ENCODE measurements at regions of chr2 and their contacts with region 1.

Region 1: DNA sequence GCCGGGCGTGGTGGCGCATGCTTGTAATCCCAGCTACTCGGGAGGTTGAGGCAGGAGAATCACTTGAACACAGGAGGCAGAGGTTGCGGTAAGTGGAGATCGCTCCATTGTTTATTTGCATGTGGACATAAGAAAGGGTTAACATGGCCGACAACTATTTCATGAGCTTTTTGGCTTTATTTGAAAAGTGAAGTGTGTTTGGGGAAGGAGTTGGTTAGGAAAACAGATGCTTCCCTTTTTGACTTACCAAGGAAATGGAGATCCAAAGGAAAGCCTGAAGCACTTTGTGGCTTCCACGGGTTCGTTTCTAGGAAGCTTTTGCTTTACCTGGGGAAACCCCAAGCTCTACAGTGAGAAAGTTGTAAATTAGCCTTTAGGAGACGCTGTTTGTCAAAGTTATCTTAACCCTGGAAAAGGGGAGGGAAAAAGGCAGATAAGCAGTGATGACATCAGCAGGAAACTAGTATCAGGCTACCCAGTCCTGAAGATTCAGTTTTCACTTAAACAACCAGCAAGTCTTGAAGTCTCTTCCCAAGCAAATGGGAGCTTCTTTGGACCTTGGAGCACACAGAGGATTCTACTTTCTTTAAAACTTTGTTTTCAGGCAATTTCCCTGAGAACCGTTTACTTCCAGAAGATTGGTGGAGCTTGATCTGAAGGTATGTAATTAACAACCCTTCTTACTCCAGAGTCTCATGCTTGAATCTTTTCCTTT is at the start of gene CASP10:
- DNase-seq: peak in 4 of 14 experiments; percentile 39 to 89 (median 88)
- ATAC-seq: peak; percentile 89
- H3K4me3 ChIP-seq: peak within 1 kb of the TSS; percentile 77
- H3K4me3 Mint-ChIP-seq: peak within 1 kb of the TSS; percentile 96
- H3K27ac ChIP-seq: peak within 1 kb of the TSS; percentile 62 to 69
- H3K27ac Mint-ChIP-seq: peak within 1 kb of the TSS; percentile 91
- H3K4me1 ChIP-seq: peaks cover 38% of the 10 kb centered on the region
- H3K4me1 Mint-ChIP-seq: peaks cover 45% of the 10 kb centered on the region
- H3K27me3 ChIP-seq: no peaks in the 10 kb centered on the region
- H3K27me3 Mint-ChIP-seq: no peaks in the 10 kb centered on the region
- CTCF ChIP-seq: peak; percentile 64
- total RNA-seq, gene CASP10: 12.6 to 13.7 TPM

Region 2: DNA sequence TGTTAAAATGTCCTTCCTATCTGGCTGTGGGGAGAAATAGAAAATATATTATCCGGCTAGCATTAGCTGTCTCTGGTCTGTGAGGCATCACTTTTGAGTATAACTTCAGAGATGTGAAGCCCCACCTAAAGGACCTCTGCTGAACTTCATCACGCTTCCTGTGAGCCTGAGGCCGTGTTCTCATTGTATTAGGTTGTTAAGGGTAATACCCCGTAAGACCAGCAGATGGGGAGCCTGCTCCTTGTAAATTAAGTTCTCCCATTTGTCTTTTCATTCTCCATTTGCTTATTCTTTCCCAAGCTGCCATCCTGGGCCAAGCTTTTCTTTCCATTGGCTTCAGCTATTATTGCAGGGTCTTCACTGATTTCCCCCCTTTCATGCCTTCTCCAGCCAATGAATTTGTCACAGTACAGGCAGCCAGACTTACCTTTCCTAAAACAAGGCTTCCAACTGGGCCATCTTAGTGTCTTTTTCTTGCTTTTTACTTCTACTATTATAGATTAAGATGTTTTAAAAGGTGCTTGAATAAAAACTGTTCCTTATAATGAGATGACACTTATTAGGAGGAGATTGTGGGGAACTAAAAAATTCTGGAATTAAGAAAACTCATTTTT is 281.2 kb before region 1 on chr2:
- CTCF ChIA-PET with region 1: interaction called, 7 read pairs
- POLR2A ChIA-PET with region 1: no interaction called
- intact Hi-C with region 1: loop called in 1 of 2 experiments (anchors 1 kb)
- DNase-seq: peak; percentile 42 to 91 (median 57)
- ATAC-seq: peak; percentile 100
- H3K4me3 ChIP-seq: no peak overlapping the region
- H3K4me3 Mint-ChIP-seq: no peak overlapping the region
- H3K27ac ChIP-seq: no peak overlapping the region
- H3K27ac Mint-ChIP-seq: peak overlapping the region; percentile 21
- H3K4me1 ChIP-seq: no peaks in the 10 kb centered on the region
- H3K4me1 Mint-ChIP-seq: peaks cover 6% of the 10 kb centered on the region
- H3K27me3 ChIP-seq: no peaks in the 10 kb centered on the region
- H3K27me3 Mint-ChIP-seq: no peaks in the 10 kb centered on the region
- CTCF ChIP-seq: peak; percentile 84

Region 3: GRCh38 chr2:201137505-201138400 is 45.1 kb before region 1 on chr2:
- CTCF ChIA-PET with region 1: no interaction called
- POLR2A ChIA-PET with region 1: no interaction called
- intact Hi-C with region 1: no loop called
- DNase-seq: no peak
- ATAC-seq: no peak
- H3K4me3 ChIP-seq: no peak overlapping the region
- H3K4me3 Mint-ChIP-seq: no peak overlapping the region
- H3K27ac ChIP-seq: no peak overlapping the region
- H3K27ac Mint-ChIP-seq: peak overlapping the region; percentile 47
- H3K4me1 ChIP-seq: peaks cover 21% of the 10 kb centered on the region
- H3K4me1 Mint-ChIP-seq: peaks cover 25% of the 10 kb centered on the region
- H3K27me3 ChIP-seq: no peaks in the 10 kb centered on the region
- H3K27me3 Mint-ChIP-seq: no peaks in the 10 kb centered on the region
- CTCF ChIP-seq: no peak

Region 4: DNA sequence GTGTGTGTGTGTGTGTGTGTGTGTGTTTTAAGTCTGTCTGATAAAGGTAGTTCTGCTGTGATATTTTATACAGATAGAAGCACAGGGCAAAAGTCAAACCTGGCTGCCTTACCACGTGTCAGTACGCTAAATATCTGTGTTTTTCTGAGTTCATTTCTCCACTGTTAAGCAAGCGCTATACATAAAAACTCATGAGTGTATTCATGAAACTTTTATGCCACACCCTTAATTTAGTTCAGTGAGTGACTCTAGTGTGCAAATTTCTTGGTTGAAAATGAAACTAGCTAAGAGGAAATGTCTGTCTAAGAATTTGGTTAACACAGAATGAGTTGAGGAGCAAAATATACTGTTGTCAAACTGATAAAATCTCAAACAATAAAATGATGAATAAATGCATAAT is 11.3 kb after region 1 on chr2:
- CTCF ChIA-PET with region 1: interaction called, 50 read pairs
- POLR2A ChIA-PET with region 1: interaction called, 26 read pairs
- intact Hi-C with region 1: loop called in 1 of 2 experiments (anchors 1 kb)
- DNase-seq: peak in 3 of 14 experiments; percentile 37 to 72 (median 42)
- ATAC-seq: peak; percentile 68
- H3K4me3 ChIP-seq: no peak overlapping the region
- H3K4me3 Mint-ChIP-seq: peak overlapping the region; percentile 68
- H3K27ac ChIP-seq: peak overlapping the region; percentile 51 to 65
- H3K27ac Mint-ChIP-seq: peak overlapping the region; percentile 91
- H3K4me1 ChIP-seq: peaks cover 60% of the 10 kb centered on the region
- H3K4me1 Mint-ChIP-seq: peaks cover 78% of the 10 kb centered on the region
- H3K27me3 ChIP-seq: no peaks in the 10 kb centered on the region
- H3K27me3 Mint-ChIP-seq: no peaks in the 10 kb centered on the region
- CTCF ChIP-seq: no peak

Region 5: GRCh38 chr2:201257956-201258665 is 75.3 kb after region 1 on chr2:
- CTCF ChIA-PET with region 1: interaction called, 4 read pairs
- POLR2A ChIA-PET with region 1: interaction called, 9 read pairs
- intact Hi-C with region 1: loop called in 1 of 2 experiments (anchors 1 kb)
- DNase-seq: peak; percentile 90 to 99 (median 95)
- ATAC-seq: peak; percentile 71
- H3K4me3 ChIP-seq: peak overlapping the region; percentile 62
- H3K4me3 Mint-ChIP-seq: peak overlapping the region; percentile 89
- H3K27ac ChIP-seq: peak overlapping the region; percentile 93 to 100
- H3K27ac Mint-ChIP-seq: peak overlapping the region; percentile 97
- H3K4me1 ChIP-seq: peaks cover 74% of the 10 kb centered on the region
- H3K4me1 Mint-ChIP-seq: peaks cover 75% of the 10 kb centered on the region
- H3K27me3 ChIP-seq: no peaks in the 10 kb centered on the region
- H3K27me3 Mint-ChIP-seq: no peaks in the 10 kb centered on the region
- CTCF ChIP-seq: no peak

Region 6: DNA sequence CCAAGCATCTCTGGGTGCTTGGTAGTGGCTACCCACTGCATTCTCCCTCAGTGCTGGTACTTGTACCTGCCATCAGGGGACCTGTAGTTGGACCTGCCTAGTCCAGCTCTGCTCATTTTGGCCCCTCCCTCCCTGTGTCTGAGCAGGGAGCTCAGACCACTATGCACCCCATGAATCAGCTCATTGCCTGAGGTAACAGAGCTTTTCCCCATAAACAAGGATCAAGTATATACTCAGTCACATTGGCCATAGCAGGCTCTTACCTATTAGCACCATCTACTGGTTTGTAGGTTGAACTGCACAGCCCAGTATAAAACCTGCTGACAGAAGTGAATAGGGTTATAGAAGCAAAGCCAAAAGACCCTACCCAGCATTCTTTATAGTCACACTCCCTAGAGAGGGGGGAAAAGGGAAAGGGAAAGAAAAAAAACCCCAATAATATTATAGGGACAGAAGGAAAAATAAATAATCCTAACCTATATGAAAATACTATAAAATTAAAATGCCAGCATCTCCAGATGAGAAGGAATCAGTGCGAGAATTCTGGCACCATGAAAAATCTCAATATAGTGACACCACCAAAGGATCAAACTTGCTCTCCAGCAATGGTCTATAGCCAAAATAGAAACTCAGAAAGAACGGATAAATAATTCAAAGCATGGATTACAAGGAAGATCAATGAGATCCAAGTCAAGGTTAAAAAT is 181.2 kb after region 1 on chr2:
- CTCF ChIA-PET with region 1: interaction called, 9 read pairs
- POLR2A ChIA-PET with region 1: no interaction called
- intact Hi-C with region 1: loop called (anchors 1 to 5 kb)
- DNase-seq: peak in 7 of 14 experiments; percentile 3 to 75 (median 48)
- ATAC-seq: peak; percentile 97
- H3K4me3 ChIP-seq: no peak overlapping the region
- H3K4me3 Mint-ChIP-seq: no peak overlapping the region
- H3K27ac ChIP-seq: no peak overlapping the region
- H3K27ac Mint-ChIP-seq: peak overlapping the region; percentile 28
- H3K4me1 ChIP-seq: peaks cover 17% of the 10 kb centered on the region
- H3K4me1 Mint-ChIP-seq: peaks cover 36% of the 10 kb centered on the region
- H3K27me3 ChIP-seq: no peaks in the 10 kb centered on the region
- H3K27me3 Mint-ChIP-seq: no peaks in the 10 kb centered on the region
- CTCF ChIP-seq: peak; percentile 95

Measured in CD4-positive, alpha-beta T cell (primary cell).